H1 (cell line): ENCODE measurements at regions of chr1 and their contacts with region 1.

Region 1: GRCh38 chr1:26500488-26501175 is 28.4 kb downstream of the HMGN2 start:
- DNase-seq: peak; percentile 25 to 98
- H3K4me3 ChIP-seq: peak overlapping the region; percentile 60 to 76 (median 68)
- H3K27ac ChIP-seq: peak overlapping the region; percentile 43; the same call in 1 of the 2 replicates
- H3K4me1 ChIP-seq: no peaks in the 10 kb centered on the region
- H3K27me3 ChIP-seq: no peaks in the 10 kb centered on the region
- CTCF ChIP-seq: no peak
- EP300 ChIP-seq: no peak
- POLR2A ChIP-seq: no peak; a peak in 1 of 3 replicates
- RAD21 ChIP-seq: no peak

Region 2: GRCh38 chr1:26408604-26409003 is 92.0 kb before region 1 on chr1:
- CTCF ChIA-PET with region 1: no interaction called
- POLR2A ChIA-PET with region 1: interaction called, 13 read pairs
- DNase-seq: peak in 1 of 2 experiments; percentile 97
- H3K4me3 ChIP-seq: peak overlapping the region; percentile 41 to 78 (median 60); a peak in 6 of 8 replicates
- H3K27ac ChIP-seq: no peak overlapping the region
- H3K4me1 ChIP-seq: peaks cover 0 to 20% (median 6%) of the 10 kb centered on the region in 4 experiments; a peak in 6 of 7 replicates
- H3K27me3 ChIP-seq: no peaks in the 10 kb centered on the region
- CTCF ChIP-seq: no peak
- EP300 ChIP-seq: peak in 1 of 2 experiments; percentile 13; a peak in 1 of 3 replicates
- POLR2A ChIP-seq: no peak
- RAD21 ChIP-seq: peak in 1 of 2 experiments; percentile 16; a peak in 1 of 4 replicates

Region 3: GRCh38 chr1:26450908-26451307 is 49.7 kb before region 1 on chr1:
- CTCF ChIA-PET with region 1: no interaction called
- POLR2A ChIA-PET with region 1: no interaction called
- DNase-seq: no peak
- H3K4me3 ChIP-seq: no peak overlapping the region
- H3K27ac ChIP-seq: no peak overlapping the region
- H3K4me1 ChIP-seq: no peaks in the 10 kb centered on the region
- H3K27me3 ChIP-seq: no peaks in the 10 kb centered on the region
- CTCF ChIP-seq: no peak
- EP300 ChIP-seq: no peak
- POLR2A ChIP-seq: no peak
- RAD21 ChIP-seq: no peak

Region 4: DNA sequence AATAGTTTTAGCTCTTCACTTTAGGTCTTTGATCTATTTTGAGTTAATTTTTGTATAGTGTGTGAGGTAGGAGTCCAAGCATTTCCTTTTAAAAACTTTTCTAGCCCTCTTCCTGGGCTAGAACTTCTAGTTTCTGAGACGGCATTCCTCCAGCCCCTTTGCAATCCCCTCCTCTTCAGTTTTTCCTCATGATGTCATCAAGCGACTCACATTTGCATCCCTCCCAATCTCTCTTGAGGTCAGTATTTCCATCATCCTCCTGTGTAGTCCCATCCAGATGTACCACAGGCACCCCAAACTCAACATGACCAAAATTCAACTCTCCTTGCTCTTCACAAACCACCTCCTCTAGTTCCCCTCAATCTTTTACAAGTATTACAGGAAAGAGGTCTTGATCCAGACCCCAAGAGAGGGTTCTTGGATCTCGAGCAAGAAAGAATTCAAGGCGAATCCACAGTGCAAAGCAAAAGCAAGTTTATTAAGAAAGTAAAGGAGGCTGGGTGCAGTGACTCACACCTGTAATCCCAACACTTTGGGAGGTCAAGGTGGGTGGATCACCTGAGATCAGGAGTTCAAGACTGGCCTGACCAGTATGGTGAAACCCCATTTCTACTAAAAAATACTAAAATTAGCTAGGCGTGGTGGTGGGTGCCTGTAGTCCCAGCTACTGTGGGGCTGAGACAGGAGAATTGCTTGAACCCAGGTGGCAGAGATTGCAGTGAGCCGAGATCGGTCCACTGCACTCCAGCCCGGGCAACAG is 17.5 kb before region 1 on chr1:
- CTCF ChIA-PET with region 1: interaction called, 21 read pairs
- POLR2A ChIA-PET with region 1: interaction called, 13 read pairs
- DNase-seq: no peak
- H3K4me3 ChIP-seq: no peak overlapping the region
- H3K27ac ChIP-seq: no peak overlapping the region
- H3K4me1 ChIP-seq: no peaks in the 10 kb centered on the region
- H3K27me3 ChIP-seq: no peaks in the 10 kb centered on the region
- CTCF ChIP-seq: no peak
- EP300 ChIP-seq: no peak
- POLR2A ChIP-seq: no peak
- RAD21 ChIP-seq: no peak

Region 5: DNA sequence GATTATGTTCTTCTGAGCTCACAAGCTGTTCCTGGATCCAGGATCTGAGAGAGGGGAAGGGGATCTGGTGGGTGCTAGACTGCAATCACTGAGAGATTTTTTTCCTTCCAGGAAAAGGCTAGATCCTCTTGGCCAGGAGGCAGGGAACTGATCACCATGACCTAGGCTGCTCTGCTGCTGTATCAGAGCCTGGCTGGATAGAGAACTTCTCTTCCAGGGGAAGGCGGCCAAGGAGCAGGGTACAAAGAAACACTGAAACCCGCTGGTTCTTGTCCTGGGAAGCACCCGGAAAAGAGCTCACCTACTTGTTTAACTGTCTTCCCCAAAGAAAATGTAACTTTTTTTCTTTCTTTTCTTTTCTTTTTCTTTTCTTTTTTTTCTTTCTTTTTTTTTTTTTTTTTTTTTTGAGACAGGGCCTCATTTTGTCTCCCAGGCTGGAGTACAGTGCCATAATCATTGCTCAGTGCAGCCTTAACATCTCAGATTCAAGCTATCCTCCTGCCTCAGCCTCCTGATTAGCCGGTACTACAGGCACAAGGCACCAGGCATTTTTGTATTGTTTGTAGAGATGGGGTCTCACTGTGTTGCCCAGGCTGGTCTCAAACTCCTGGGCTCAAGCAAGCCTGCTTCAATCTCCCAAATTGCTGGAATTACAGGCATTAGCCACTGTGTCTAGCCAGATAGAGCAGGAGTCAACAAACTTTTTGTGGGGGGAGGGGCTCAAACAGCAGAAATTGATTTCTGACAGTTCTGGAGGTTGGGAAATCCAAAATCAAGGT is 16.5 kb after region 1 on chr1:
- CTCF ChIA-PET with region 1: interaction called, 19 read pairs
- POLR2A ChIA-PET with region 1: interaction called, 19 read pairs
- DNase-seq: no peak
- H3K4me3 ChIP-seq: no peak overlapping the region
- H3K27ac ChIP-seq: no peak overlapping the region
- H3K4me1 ChIP-seq: peaks cover 0 to 3% (median 0%) of the 10 kb centered on the region in 4 experiments; a peak in 1 of 7 replicates
- H3K27me3 ChIP-seq: no peaks in the 10 kb centered on the region; a peak in 1 of 7 replicates
- CTCF ChIP-seq: no peak
- EP300 ChIP-seq: no peak
- POLR2A ChIP-seq: no peak
- RAD21 ChIP-seq: no peak

Region 6: GRCh38 chr1:26529655-26530409 is 29.2 kb after region 1 on chr1 and contains the start of gene RPS6KA1:
- CTCF ChIA-PET with region 1: interaction called, 23 read pairs
- POLR2A ChIA-PET with region 1: interaction called, 48 read pairs
- DNase-seq: peak in 1 of 2 experiments; percentile 88
- H3K4me3 ChIP-seq: peak within 1 kb of the TSS; percentile 51 to 97 (median 94)
- H3K27ac ChIP-seq: peak within 1 kb of the TSS; percentile 42; the same call in 1 of the 2 replicates
- H3K4me1 ChIP-seq: peaks cover 11 to 20% (median 19%) of the 10 kb centered on the region in 4 experiments
- H3K27me3 ChIP-seq: no peaks in the 10 kb centered on the region
- CTCF ChIP-seq: no peak
- EP300 ChIP-seq: no peak
- POLR2A ChIP-seq: peak; percentile 67 to 69; a peak in 2 of 3 replicates
- RAD21 ChIP-seq: no peak
- total RNA-seq, gene RPS6KA1: 55.0 and 56.5 TPM in 2 replicates

Region 7: GRCh38 chr1:26541816-26542711 is 41.4 kb after region 1 on chr1:
- CTCF ChIA-PET with region 1: interaction called, 27 read pairs
- POLR2A ChIA-PET with region 1: interaction called, 14 read pairs
- DNase-seq: peak in 1 of 2 experiments; percentile 78
- H3K4me3 ChIP-seq: no peak overlapping the region; a peak in 1 of 8 replicates
- H3K27ac ChIP-seq: peak overlapping the region; percentile 45; the same call in 1 of the 2 replicates
- H3K4me1 ChIP-seq: peaks cover 0 to 17% (median 7%) of the 10 kb centered on the region in 4 experiments; a peak in 6 of 7 replicates
- H3K27me3 ChIP-seq: no peaks in the 10 kb centered on the region
- CTCF ChIP-seq: peak; percentile 59 to 74 (median 66)
- EP300 ChIP-seq: no peak
- POLR2A ChIP-seq: no peak
- RAD21 ChIP-seq: peak; percentile 34 to 41; a peak in 3 of 4 replicates